ENCODE measurements at regions of chr1 and their contacts with region 1.

Region 1: GRCh38 chr1:15513192-15513591 is 10.8 kb downstream of the CASP9 start:
- DNase-seq: no peak
- H3K4me3 ChIP-seq: no peak overlapping the region
- H3K27ac ChIP-seq: no peak overlapping the region
- H3K4me1 ChIP-seq: peaks cover 0 to 10% (median 0%) of the 10 kb centered on the region in 4 donors
- H3K27me3 ChIP-seq: no peaks in the 10 kb centered on the region
- CTCF ChIP-seq: no peak
- EP300 ChIP-seq: no peak
- POLR2A ChIP-seq: no peak

Region 2: GRCh38 chr1:15485636-15486035 is 27.6 kb before region 1 on chr1:
- in situ Hi-C with region 1: no loop called
- intact Hi-C with region 1: loop called (anchors 2 kb)
- DNase-seq: no peak
- H3K4me3 ChIP-seq: no peak overlapping the region
- H3K27ac ChIP-seq: no peak overlapping the region
- H3K4me1 ChIP-seq: no peaks in the 10 kb centered on the region
- H3K27me3 ChIP-seq: no peaks in the 10 kb centered on the region
- CTCF ChIP-seq: no peak
- EP300 ChIP-seq: no peak
- POLR2A ChIP-seq: no peak

Measured in transverse colon (tissue), 4 donors.